Activated B cell treated with CpG ODN at 0.5 μM for 24 hours (primary cell): ENCODE measurements at regions of chr12 and their contacts with region 1.

Region 1: GRCh38 chr12:122871851-122872780 is 23.8 kb downstream of the VPS37B start:
- DNase-seq: peak; percentile 46
- ATAC-seq: peak; percentile 66
- H3K4me3 Mint-ChIP-seq: peak overlapping the region; percentile 84
- H3K27ac Mint-ChIP-seq: peak overlapping the region; percentile 93
- H3K4me1 Mint-ChIP-seq: peaks cover 91% of the 10 kb centered on the region
- H3K27me3 Mint-ChIP-seq: no peaks in the 10 kb centered on the region
- CTCF ChIP-seq: no peak

Region 2: DNA sequence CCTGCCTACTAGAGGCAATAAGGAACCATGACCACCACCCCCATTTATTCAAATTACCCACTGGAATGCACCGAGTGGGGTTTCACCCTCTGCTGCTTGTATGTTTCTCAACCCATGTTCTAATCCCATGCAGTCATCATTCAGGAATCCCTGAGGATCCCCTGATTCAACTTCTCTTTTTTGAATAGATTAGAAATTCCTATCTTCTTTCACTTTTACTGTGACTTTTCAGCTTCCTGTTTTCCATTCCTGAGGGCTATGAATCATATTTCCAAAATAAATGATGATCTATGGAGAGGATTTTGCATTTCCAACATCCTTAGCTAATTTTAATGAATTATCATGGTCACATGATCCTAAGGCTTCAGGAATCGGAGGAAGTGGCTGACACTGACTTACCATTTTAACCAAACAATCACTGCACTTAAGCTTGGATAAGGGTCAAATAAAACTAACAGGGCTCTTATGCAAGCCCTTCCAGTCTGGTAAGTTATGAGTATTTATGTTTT is 1681.5 kb before region 1 on chr12:
- CTCF ChIA-PET with region 1: no interaction called
- POLR2A ChIA-PET with region 1: no interaction called
- intact Hi-C with region 1: no loop called
- DNase-seq: no peak
- ATAC-seq: peak; percentile 68
- H3K4me3 Mint-ChIP-seq: no peak overlapping the region
- H3K27ac Mint-ChIP-seq: no peak overlapping the region
- H3K4me1 Mint-ChIP-seq: peaks cover 14% of the 10 kb centered on the region
- H3K27me3 Mint-ChIP-seq: no peaks in the 10 kb centered on the region
- CTCF ChIP-seq: no peak

Region 3: DNA sequence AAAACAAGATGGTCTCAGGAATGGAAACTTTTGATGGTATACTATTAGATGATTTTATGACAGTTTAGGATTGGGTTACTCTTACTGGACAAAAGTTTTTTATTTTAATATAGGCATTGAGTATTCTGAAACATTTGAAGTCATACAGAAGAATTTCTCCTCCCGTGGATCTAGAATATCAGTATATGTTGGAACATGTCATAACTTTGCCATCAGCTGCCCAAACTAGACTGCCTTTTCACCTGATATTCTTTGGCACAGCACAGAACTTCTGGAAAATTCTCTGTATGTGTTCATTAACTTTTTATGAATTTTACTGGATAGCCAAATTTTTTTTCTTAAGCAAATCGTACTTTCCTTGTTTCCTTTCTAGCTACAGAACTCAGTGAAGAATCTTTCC is 269.7 kb before region 1 on chr12:
- CTCF ChIA-PET with region 1: no interaction called
- POLR2A ChIA-PET with region 1: no interaction called
- intact Hi-C with region 1: no loop called
- DNase-seq: no peak
- ATAC-seq: no peak
- H3K4me3 Mint-ChIP-seq: no peak overlapping the region
- H3K27ac Mint-ChIP-seq: no peak overlapping the region
- H3K4me1 Mint-ChIP-seq: no peaks in the 10 kb centered on the region
- H3K27me3 Mint-ChIP-seq: no peaks in the 10 kb centered on the region
- CTCF ChIP-seq: no peak

Region 4: GRCh38 chr12:122946690-122947341 is 74.7 kb after region 1 on chr12:
- CTCF ChIA-PET with region 1: interaction called, 6 read pairs
- POLR2A ChIA-PET with region 1: interaction called, 5 read pairs
- intact Hi-C with region 1: loop called (anchors 1 kb)
- DNase-seq: peak; percentile 52
- ATAC-seq: peak; percentile 81
- H3K4me3 Mint-ChIP-seq: peak overlapping the region; percentile 57
- H3K27ac Mint-ChIP-seq: peak overlapping the region; percentile 68
- H3K4me1 Mint-ChIP-seq: peaks cover 48% of the 10 kb centered on the region
- H3K27me3 Mint-ChIP-seq: no peaks in the 10 kb centered on the region
- CTCF ChIP-seq: no peak

Region 5: GRCh38 chr12:122951979-122952892 is 80.1 kb after region 1 on chr12:
- CTCF ChIA-PET with region 1: interaction called, 16 read pairs
- POLR2A ChIA-PET with region 1: interaction called, 5 read pairs
- intact Hi-C with region 1: loop called (anchors 1 kb)
- DNase-seq: peak; percentile 60
- ATAC-seq: peak; percentile 96
- H3K4me3 Mint-ChIP-seq: no peak overlapping the region
- H3K27ac Mint-ChIP-seq: peak overlapping the region; percentile 18
- H3K4me1 Mint-ChIP-seq: peaks cover 24% of the 10 kb centered on the region
- H3K27me3 Mint-ChIP-seq: no peaks in the 10 kb centered on the region
- CTCF ChIP-seq: peak; percentile 79

Region 6: GRCh38 chr12:122995503-122996187 is 123.5 kb after region 1 on chr12:
- CTCF ChIA-PET with region 1: no interaction called
- POLR2A ChIA-PET with region 1: no interaction called
- intact Hi-C with region 1: no loop called
- DNase-seq: no peak
- ATAC-seq: no peak
- H3K4me3 Mint-ChIP-seq: no peak overlapping the region
- H3K27ac Mint-ChIP-seq: no peak overlapping the region
- H3K4me1 Mint-ChIP-seq: peaks cover 4% of the 10 kb centered on the region
- H3K27me3 Mint-ChIP-seq: no peaks in the 10 kb centered on the region
- CTCF ChIP-seq: no peak

Region 7: GRCh38 chr12:123559468-123559867 is 687.4 kb after region 1 on chr12:
- CTCF ChIA-PET with region 1: no interaction called
- POLR2A ChIA-PET with region 1: no interaction called
- intact Hi-C with region 1: no loop called
- DNase-seq: no peak
- ATAC-seq: no peak
- H3K4me3 Mint-ChIP-seq: no peak overlapping the region
- H3K27ac Mint-ChIP-seq: no peak overlapping the region
- H3K4me1 Mint-ChIP-seq: no peaks in the 10 kb centered on the region
- H3K27me3 Mint-ChIP-seq: no peaks in the 10 kb centered on the region
- CTCF ChIP-seq: no peak